ENCODE measurements at regions of chr3 and their contacts with region 1.

Region 1: DNA sequence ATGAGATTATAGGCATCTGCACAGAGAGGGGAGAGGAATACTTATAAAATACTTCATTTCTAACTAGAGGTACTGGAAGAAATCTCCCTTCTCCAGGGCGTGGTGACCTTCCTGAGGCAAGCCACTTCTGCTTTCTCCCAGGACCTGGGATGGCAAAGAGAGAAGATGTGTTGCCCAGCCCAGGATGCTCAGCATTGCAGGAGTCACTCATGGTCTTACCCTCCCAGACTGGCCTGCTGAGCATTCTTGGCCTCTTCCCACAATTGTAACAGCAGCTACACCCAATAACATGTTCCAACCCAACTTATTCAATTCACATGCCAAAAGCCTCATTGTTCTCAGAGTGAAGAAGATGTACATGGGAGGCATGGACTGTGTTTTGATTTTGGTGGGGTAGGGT is 37.9 kb downstream of the IL20RB start:
- DNase-seq: no peak
- H3K4me3 ChIP-seq: no peak overlapping the region
- H3K27ac ChIP-seq: no peak overlapping the region
- H3K27me3 ChIP-seq: no peaks in the 10 kb centered on the region
- CTCF ChIP-seq: no peak

Region 2: DNA sequence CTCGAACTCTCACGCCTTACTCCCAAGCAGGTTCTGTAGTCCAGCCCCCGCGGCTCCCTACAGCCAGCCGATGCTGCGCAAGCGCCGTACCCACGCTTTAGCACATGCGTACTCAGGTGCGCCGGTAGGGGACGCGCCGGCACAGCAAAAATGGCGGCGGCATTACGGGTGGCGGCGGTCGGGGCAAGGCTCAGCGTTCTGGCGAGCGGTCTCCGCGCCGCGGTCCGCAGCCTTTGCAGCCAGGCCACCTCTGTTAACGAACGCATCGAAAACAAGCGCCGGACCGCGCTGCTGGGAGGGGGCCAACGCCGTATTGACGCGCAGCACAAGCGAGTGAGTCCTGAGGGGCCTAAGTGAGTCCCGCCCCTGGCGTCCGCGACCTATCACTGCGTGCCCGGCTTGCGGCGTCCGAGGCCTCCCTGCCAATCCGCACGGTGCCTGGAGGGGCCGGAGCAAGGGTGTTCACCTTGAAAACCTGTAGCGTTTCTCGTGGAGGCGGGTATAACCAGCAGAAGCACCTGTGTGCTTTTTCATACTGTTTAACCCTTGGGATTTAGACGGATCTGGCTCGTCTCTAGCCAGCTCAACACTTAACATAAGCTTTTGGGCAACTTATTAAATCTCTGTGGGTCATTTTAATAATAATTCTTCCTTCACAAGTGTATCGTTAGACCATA is 745.3 kb before region 1 on chr3 and contains the start of gene PCCB:
- CTCF ChIA-PET with region 1: no interaction called
- POLR2A ChIA-PET with region 1: interaction called, 16 read pairs
- DNase-seq: peak; percentile 81
- H3K4me3 ChIP-seq: peak within 1 kb of the TSS; percentile 85
- H3K27ac ChIP-seq: peak within 1 kb of the TSS; percentile 93
- H3K27me3 ChIP-seq: no peaks in the 10 kb centered on the region
- CTCF ChIP-seq: peak; percentile 80
- polyA plus RNA-seq, gene PCCB: 57.2 and 67.7 TPM in 2 replicates

Measured in AG04450 (cell line).